ENCODE measurements at regions of chr3 and their contacts with region 1.

Region 1: GRCh38 chr3:9384141-9384853 is 13.1 kb upstream of the SETD5 start:
- DNase-seq: no peak
- ATAC-seq: no peak
- H3K4me3 ChIP-seq: no peak overlapping the region
- H3K27ac ChIP-seq: no peak overlapping the region
- H3K4me1 ChIP-seq: no peaks in the 10 kb centered on the region
- H3K27me3 ChIP-seq: no peaks in the 10 kb centered on the region
- CTCF ChIP-seq: no peak
- EP300 ChIP-seq: no peak
- POLR2A ChIP-seq: no peak; the same call in 1 of the 2 replicates
- RAD21 ChIP-seq: no peak

Region 2: GRCh38 chr3:9373465-9373864 is 10.8 kb before region 1 on chr3:
- CTCF ChIA-PET with region 1: no interaction called
- POLR2A ChIA-PET with region 1: interaction called, 11 read pairs
- in situ Hi-C with region 1: no loop called
- intact Hi-C with region 1: no loop called
- DNase-seq: no peak
- ATAC-seq: no peak
- H3K4me3 ChIP-seq: no peak overlapping the region
- H3K27ac ChIP-seq: no peak overlapping the region
- H3K4me1 ChIP-seq: no peaks in the 10 kb centered on the region
- H3K27me3 ChIP-seq: no peaks in the 10 kb centered on the region
- CTCF ChIP-seq: no peak
- EP300 ChIP-seq: no peak
- POLR2A ChIP-seq: no peak
- RAD21 ChIP-seq: no peak

Measured in K562 (cell line).